Dorsolateral prefrontal cortex (tissue), 120 donors: ENCODE measurements at regions of chr13 and their contacts with region 1.

Region 1: DNA sequence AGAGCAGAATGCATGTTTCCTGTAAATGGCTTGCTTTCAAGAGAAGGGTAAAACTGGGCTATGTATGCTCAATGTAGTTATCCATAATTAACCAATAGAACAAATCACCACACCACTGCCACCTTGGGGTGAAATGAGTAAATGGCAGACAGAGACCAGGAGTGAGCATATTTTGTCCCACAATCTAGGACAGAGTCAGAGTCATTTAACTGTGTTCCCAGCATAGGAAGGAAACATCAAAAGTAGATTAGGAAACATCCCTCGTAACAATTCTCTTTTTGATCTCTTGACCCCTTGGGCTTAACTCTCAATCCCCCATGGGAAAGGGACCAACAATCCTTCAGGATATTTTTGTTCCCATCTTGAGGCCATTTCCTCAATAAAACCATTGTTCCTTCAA is 224.8 kb downstream of the NHLRC3 start:
- DNase-seq: peak in 6 of 10 donors; percentile 13 to 72 (median 34)
- H3K4me3 ChIP-seq: peak overlapping the region in 3 of 59 donors; percentile 2 to 10 (median 2)
- H3K27ac ChIP-seq: peak overlapping the region in 17 of 59 donors; percentile 0 to 63 (median 20)
- H3K27me3 ChIP-seq: no peaks in the 10 kb centered on the region
- CTCF ChIP-seq: peak; percentile 36 to 86 (median 72)

Region 2: GRCh38 chr13:39051157-39051556 is 211.9 kb before region 1 on chr13:
- intact Hi-C with region 1: loop called (anchors 2 to 10 kb)
- DNase-seq: no peak
- H3K4me3 ChIP-seq: peak overlapping the region in 1 of 59 donors; percentile 28
- H3K27ac ChIP-seq: peak overlapping the region in 30 of 59 donors; percentile 0 to 81 (median 54)
- H3K27me3 ChIP-seq: no peaks in the 10 kb centered on the region
- CTCF ChIP-seq: peak; percentile 21 to 86 (median 69)

Region 3: DNA sequence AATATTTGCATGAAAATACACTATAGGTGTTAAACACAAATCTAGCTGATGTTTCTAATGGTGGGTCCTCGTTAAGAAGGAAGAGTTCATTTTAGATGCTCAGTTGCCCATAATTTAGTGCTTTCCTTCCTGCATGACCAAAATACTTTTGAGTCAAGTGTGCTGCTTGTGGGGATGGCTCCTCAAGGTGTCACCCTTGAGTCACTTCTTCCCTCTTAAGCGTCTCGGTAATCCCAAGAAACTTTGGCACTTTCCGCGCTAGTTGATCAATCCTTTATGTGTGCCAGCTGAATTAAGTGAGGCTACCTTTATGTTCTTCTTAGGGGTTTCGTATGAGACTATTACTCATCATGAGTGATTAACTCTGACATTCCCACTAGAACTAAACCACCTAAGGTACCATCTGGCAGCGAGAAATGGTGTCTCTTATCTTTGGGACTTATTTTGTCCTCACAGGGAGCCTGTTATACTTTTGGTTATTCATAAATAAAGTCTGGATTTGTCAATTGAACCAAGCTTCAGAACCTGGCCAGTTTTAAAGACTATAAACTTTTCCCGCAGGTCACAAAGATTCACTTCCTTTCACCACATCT is 118.0 kb before region 1 on chr13:
- intact Hi-C with region 1: loop called in 1 of 2 experiments (anchors 5 kb)
- DNase-seq: peak; percentile 13 to 72 (median 52)
- H3K4me3 ChIP-seq: peak overlapping the region in 41 of 59 donors; percentile 1 to 58 (median 29)
- H3K27ac ChIP-seq: peak overlapping the region in 4 of 59 donors; percentile 21 to 34 (median 28)
- H3K27me3 ChIP-seq: no peaks in the 10 kb centered on the region
- CTCF ChIP-seq: peak; percentile 37 to 89 (median 79)

Region 4: DNA sequence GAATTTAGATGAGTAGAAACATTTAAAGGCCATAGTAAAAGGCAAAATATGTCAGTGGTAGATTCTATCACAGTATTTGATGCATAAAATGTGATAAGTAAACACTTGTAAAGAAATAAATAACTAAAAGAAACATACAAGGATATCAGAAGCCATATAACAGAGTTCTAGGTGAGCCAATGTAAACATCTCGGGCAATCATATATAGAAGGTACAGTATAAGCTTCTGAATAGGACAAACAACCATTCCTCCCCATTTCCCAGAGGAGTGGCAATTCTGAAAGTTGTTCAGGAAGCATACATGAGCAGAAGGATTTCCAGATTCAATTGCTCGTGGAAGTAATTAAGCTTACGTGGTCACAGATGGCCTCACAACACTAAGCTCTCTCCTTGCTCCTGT is 72.7 kb after region 1 on chr13:
- intact Hi-C with region 1: no loop called
- DNase-seq: no peak
- H3K4me3 ChIP-seq: no peak overlapping the region
- H3K27ac ChIP-seq: no peak overlapping the region
- H3K27me3 ChIP-seq: no peaks in the 10 kb centered on the region
- CTCF ChIP-seq: no peak

Region 5: DNA sequence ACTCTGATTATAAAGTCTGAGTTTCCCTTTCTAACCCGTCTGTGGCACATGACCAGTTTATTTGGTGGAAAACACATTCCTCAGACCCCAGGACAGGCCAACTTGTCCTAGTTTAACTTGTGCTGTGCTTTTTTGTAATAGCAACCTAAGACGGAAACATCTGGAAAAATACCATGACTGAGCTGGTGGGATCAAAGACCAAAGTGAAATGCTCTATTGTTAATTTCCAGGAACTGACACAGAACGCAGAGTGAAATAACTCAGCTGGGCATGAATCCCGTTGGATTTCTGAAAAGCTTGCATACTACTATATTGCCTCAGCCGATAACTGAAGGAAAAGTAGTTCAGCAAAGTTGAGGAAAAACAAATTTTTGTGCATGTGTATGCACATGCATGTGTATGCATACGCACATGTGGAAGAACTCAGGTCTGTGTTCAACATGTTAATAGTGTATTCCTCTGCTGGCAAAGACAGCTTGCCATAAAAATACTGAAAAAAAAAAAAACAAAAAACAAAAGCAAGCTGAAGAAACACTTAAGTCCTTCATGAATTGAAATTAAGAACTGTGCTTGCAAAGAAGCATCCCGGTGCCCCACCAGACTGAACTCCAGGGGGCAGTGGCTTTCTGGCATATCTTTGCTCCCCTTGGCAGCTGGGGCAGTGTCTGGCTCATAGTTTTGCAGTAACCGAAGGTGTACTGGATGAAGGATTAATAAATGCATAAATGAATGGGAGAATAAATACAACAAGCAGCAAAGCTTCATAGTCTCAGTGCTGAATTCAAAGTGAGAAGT is 152.2 kb after region 1 on chr13:
- intact Hi-C with region 1: loop called in 1 of 2 experiments (anchors 10 kb)
- DNase-seq: peak in 9 of 10 donors; percentile 10 to 66 (median 56)
- H3K4me3 ChIP-seq: peak overlapping the region in 38 of 59 donors; percentile 1 to 48 (median 24)
- H3K27ac ChIP-seq: peak overlapping the region; percentile 4 to 88 (median 57)
- H3K27me3 ChIP-seq: no peaks in the 10 kb centered on the region
- CTCF ChIP-seq: peak in 53 of 56 donors; percentile 16 to 79 (median 59)

Region 6: GRCh38 chr13:39510316-39510695 is 247.3 kb after region 1 on chr13:
- intact Hi-C with region 1: no loop called
- DNase-seq: no peak
- H3K4me3 ChIP-seq: no peak overlapping the region
- H3K27ac ChIP-seq: no peak overlapping the region
- H3K27me3 ChIP-seq: no peaks in the 10 kb centered on the region
- CTCF ChIP-seq: no peak

Region 7: GRCh38 chr13:39602614-39603366 is 339.8 kb after region 1 on chr13 and contains the start of gene LHFPL6:
- intact Hi-C with region 1: loop called in 1 of 2 experiments (anchors 5 kb)
- DNase-seq: peak; percentile 57 to 87 (median 74)
- H3K4me3 ChIP-seq: peak within 1 kb of the TSS; percentile 58 to 97 (median 84)
- H3K27ac ChIP-seq: peak within 1 kb of the TSS; percentile 35 to 92 (median 82)
- H3K27me3 ChIP-seq: no peaks in the 10 kb centered on the region
- CTCF ChIP-seq: peak in 52 of 56 donors; percentile 19 to 75 (median 50)
- total RNA-seq, gene LHFPL6: 28.1 to 66.9 (median 45.5) TPM